Panc1 (cell line): ENCODE measurements at regions of chr13 and their contacts with region 1.

Region 1: DNA sequence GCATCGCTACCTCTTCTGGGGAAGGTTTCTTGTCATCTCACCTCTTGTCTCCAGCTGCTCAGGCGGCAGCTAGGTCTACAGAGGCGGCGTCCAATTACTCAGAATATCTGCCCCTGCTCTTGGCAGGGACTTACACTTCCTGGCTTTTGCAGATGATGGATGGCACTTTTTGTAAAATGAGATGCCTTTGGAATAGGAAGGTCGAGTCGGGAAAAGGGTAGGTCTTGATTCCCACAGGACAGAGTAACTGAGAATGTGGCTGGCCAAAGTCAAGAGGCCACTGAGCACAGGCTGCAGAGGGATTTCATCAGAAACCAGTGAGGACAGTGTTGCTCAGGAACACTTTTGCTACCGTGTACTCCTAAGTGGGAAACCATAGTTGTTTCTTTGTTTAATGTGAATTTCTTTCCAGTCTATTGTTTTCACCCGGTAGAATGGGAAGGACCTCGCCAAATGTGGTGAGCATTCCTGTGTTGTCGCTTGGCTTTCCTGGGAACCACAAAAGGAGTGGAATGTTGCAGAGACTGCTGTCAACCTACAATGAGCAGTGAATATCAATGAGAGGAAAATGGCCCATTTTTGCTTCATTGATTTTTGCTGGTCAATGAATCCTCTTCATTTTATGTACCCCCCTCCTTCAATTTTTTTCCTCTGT is 383.7 kb downstream of the HS6ST3 start:
- DNase-seq: no peak
- ATAC-seq: no peak
- H3K4me3 ChIP-seq: no peak overlapping the region
- H3K27ac ChIP-seq: no peak overlapping the region
- H3K4me1 ChIP-seq: no peaks in the 10 kb centered on the region
- H3K27me3 ChIP-seq: no peaks in the 10 kb centered on the region; the same call in 1 of the 2 replicates
- CTCF ChIP-seq: no peak

Region 2: DNA sequence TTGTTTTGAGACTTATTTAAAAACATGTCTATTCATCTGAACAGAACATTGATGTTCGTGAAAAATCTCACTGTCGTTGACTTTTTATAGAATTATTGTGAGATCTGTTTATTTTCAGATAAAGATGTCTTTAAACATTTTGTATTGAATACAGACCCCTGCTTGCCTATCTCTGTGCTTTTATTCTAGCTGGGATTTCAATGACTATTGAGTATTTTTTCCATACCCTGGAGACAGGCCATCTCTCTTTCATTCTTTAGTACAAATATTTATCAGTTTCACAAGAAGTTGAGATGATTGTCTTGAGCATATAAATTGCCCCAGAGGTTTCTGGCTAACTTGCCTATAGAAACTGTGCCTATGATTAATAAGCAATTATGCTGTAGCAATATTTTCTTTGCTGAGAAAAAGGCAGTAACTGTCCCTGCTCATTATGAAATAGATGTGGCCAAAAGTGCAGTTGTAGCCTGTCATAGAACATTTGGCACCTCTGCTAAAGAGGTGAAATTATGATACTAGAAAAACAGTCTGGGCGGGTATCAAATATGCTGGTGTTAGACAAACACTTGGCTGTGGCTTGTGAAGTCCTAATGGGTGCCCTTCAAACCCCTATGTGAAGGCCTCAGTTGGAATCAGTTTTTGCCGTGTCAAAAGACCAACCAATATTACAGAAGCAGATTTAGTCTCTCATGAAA is 23.2 kb before region 1 on chr13:
- CTCF ChIA-PET with region 1: no interaction called
- POLR2A ChIA-PET with region 1: no interaction called
- in situ Hi-C with region 1: no loop called
- intact Hi-C with region 1: no loop called
- DNase-seq: no peak
- ATAC-seq: no peak
- H3K4me3 ChIP-seq: no peak overlapping the region
- H3K27ac ChIP-seq: no peak overlapping the region
- H3K4me1 ChIP-seq: no peaks in the 10 kb centered on the region
- H3K27me3 ChIP-seq: no peaks in the 10 kb centered on the region
- CTCF ChIP-seq: no peak

Region 3: DNA sequence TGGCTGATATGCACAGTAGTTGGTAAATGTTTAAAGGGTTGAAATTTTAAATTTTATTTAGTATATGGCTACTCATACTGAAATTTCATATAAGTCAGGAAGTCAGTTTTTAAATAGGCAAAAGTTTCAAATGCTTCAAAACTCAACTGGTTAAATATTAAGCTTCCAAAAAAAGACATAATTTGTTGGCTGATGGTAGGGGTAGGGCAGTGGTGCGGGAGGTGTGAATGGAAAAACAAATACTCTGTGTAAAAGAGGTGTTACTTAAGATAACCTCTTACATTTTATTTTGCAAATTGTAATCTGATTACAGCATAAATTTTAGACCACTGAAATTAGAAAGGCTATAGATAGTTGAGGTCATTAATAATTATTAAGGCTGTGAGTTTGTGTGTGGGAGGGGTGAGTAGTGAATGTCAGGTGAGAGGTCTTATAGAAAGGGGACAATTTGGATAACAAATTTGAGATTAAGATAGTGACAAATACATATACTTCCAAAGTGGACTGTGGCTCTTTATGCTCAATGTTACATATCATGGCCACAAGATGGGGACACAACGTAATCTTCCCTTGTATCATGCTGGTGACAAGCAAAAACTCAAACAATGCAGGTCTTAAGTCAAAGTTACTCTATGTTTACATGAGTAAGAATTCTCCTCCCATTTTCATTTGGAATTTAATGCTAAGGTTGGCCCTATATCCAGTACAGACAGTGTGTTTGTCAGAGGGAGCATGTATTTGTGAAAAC is 557.2 kb after region 1 on chr13:
- CTCF ChIA-PET with region 1: interaction called, 10 read pairs
- POLR2A ChIA-PET with region 1: no interaction called
- in situ Hi-C with region 1: no loop called
- intact Hi-C with region 1: no loop called
- DNase-seq: no peak
- ATAC-seq: peak; percentile 74
- H3K4me3 ChIP-seq: no peak overlapping the region
- H3K27ac ChIP-seq: 0 out of 2 replicates have a peak overlapping the region, but pooled peaks have one; percentile 39
- H3K4me1 ChIP-seq: peaks cover 5% of the 10 kb centered on the region
- H3K27me3 ChIP-seq: no peaks in the 10 kb centered on the region
- CTCF ChIP-seq: peak; percentile 54; the same call in 1 of the 2 replicates